ENCODE measurements at regions of chr1 and their contacts with region 1.

Region 1: DNA sequence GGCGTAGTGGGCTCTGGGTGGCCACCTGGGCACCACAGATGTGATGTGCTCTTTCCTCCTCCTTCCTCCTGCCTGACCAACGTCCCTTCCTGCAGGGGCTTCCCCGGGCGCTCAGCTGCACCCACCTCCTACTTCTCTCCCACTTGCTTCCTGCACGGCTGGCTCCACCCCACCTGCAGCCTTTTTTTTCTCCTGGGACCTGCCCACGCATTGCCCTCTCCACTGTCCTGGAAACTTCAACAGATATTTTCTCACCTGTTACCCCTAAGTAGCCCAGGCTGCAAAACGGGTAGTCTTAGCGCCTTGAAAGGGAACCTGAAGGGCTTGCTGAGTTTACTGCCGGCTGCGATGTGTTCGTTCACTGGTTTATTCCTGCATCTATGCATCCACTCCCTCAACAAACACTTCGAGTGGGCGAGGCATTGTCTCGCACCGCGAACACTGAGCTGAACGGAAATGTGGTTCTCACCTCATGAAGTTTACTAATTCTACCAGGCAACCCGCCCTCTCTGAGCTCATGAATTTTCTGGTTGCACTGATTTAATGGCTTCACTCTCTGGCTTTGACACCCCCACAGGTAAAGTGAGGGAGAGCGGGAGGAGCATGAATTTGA is 23.6 kb downstream of the ZBTB18 start:
- DNase-seq: peak; percentile 47 to 92 (median 74)
- ATAC-seq: peak; percentile 90
- H3K4me3 ChIP-seq: peak overlapping the region; percentile 38 to 41
- H3K4me3 Mint-ChIP-seq: peak overlapping the region; percentile 80
- H3K27ac ChIP-seq: peak overlapping the region; percentile 66 to 67
- H3K27ac Mint-ChIP-seq: peak overlapping the region; percentile 98
- H3K4me1 ChIP-seq: peaks cover 31% of the 10 kb centered on the region
- H3K4me1 Mint-ChIP-seq: peaks cover 45% of the 10 kb centered on the region
- H3K27me3 ChIP-seq: no peaks in the 10 kb centered on the region
- H3K27me3 Mint-ChIP-seq: no peaks in the 10 kb centered on the region
- CTCF ChIP-seq: no peak

Region 2: GRCh38 chr1:243974451-243975292 is 100.0 kb before region 1 on chr1:
- CTCF ChIA-PET with region 1: no interaction called
- POLR2A ChIA-PET with region 1: no interaction called
- intact Hi-C with region 1: no loop called
- DNase-seq: no peak
- ATAC-seq: no peak
- H3K4me3 ChIP-seq: no peak overlapping the region
- H3K4me3 Mint-ChIP-seq: no peak overlapping the region
- H3K27ac ChIP-seq: no peak overlapping the region
- H3K27ac Mint-ChIP-seq: no peak overlapping the region
- H3K4me1 ChIP-seq: no peaks in the 10 kb centered on the region
- H3K4me1 Mint-ChIP-seq: no peaks in the 10 kb centered on the region
- H3K27me3 ChIP-seq: no peaks in the 10 kb centered on the region
- H3K27me3 Mint-ChIP-seq: peaks cover 4% of the 10 kb centered on the region
- CTCF ChIP-seq: no peak

Region 3: DNA sequence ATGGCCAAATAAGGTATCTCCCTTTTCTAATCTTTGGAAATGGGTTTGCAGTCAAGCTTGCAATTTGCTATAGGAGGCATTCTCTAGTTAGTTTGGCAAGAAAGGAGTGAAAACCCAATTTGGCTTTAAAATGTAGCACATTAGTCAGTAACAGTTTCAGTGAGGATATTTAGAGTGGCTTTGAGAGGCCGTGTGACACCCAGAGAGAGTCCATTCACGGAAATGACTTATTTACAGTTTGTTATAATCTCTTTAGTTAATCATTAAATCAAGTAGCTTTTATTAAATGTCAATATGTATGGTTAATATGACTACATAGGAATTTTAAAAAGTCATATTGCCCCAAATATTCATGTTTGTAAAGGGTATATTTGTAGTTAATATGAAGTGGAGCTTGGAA is 14.0 kb before region 1 on chr1:
- CTCF ChIA-PET with region 1: interaction called, 10 read pairs
- POLR2A ChIA-PET with region 1: interaction called, 14 read pairs
- intact Hi-C with region 1: no loop called
- DNase-seq: no peak
- ATAC-seq: no peak
- H3K4me3 ChIP-seq: no peak overlapping the region
- H3K4me3 Mint-ChIP-seq: no peak overlapping the region
- H3K27ac ChIP-seq: no peak overlapping the region
- H3K27ac Mint-ChIP-seq: peak overlapping the region; percentile 53
- H3K4me1 ChIP-seq: peaks cover 3% of the 10 kb centered on the region
- H3K4me1 Mint-ChIP-seq: peaks cover 31% of the 10 kb centered on the region
- H3K27me3 ChIP-seq: no peaks in the 10 kb centered on the region
- H3K27me3 Mint-ChIP-seq: no peaks in the 10 kb centered on the region
- CTCF ChIP-seq: no peak

Measured in CD8-positive, alpha-beta T cell (primary cell).